ENCODE measurements at regions of chr2 and their contacts with region 1.

Region 1: GRCh38 chr2:156334496-156335478 is 2.3 kb upstream of the NR4A2 start:
- DNase-seq: peak; percentile 57 to 93 (median 67)
- H3K4me3 ChIP-seq: peak overlapping the region; percentile 48 to 80 (median 71)
- H3K27ac ChIP-seq: peak overlapping the region; percentile 33 to 87
- H3K4me1 ChIP-seq: peaks cover 17 to 45% (median 41%) of the 10 kb centered on the region in 4 experiments
- H3K27me3 ChIP-seq: peaks cover 9 to 27% (median 18%) of the 10 kb centered on the region in 5 experiments

Region 2: DNA sequence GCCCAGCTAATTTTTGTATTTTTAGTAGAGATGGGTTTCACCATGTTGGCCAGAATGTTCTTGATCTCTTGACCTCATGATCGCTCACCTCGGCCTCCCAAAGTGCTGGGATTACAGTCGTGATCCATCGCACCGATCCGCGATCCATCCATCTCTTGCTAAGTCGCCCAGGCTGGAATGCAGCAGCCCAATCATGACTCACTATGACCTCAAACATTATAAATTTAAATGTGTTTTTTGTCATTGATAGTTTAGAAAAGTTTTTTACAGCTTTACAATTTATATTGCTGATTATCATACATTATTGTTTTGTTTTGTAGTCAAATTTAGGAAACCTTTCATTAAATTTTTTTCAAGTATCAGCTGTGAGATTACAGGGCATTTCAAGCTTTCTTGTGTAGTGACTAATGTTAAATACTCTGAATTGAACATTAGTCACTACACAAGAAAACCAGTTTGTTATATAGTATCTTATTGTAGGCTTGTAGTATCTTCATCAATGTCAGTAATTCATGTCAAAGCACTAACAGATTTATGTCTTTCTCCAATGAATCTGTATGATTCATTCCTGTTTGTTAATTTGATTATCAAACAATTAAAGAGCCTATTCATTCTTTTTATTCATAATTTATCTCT is 39.7 kb before region 1 on chr2:
- CTCF ChIA-PET with region 1: no interaction called
- POLR2A ChIA-PET with region 1: no interaction called
- DNase-seq: no peak
- H3K4me3 ChIP-seq: no peak overlapping the region
- H3K27ac ChIP-seq: no peak overlapping the region
- H3K4me1 ChIP-seq: no peaks in the 10 kb centered on the region
- H3K27me3 ChIP-seq: no peaks in the 10 kb centered on the region

Region 3: GRCh38 chr2:156319811-156320485 is 14.8 kb before region 1 on chr2:
- CTCF ChIA-PET with region 1: interaction called, 11 read pairs
- POLR2A ChIA-PET with region 1: no interaction called
- DNase-seq: peak in 2 of 3 donors; percentile 52 to 65
- H3K4me3 ChIP-seq: peak overlapping the region in 4 of 7 experiments; percentile 8 to 46 (median 39)
- H3K27ac ChIP-seq: no peak overlapping the region
- H3K4me1 ChIP-seq: peaks cover 5 to 33% (median 24%) of the 10 kb centered on the region in 4 experiments
- H3K27me3 ChIP-seq: peaks cover 47 to 96% (median 53%) of the 10 kb centered on the region in 5 experiments

Region 4: DNA sequence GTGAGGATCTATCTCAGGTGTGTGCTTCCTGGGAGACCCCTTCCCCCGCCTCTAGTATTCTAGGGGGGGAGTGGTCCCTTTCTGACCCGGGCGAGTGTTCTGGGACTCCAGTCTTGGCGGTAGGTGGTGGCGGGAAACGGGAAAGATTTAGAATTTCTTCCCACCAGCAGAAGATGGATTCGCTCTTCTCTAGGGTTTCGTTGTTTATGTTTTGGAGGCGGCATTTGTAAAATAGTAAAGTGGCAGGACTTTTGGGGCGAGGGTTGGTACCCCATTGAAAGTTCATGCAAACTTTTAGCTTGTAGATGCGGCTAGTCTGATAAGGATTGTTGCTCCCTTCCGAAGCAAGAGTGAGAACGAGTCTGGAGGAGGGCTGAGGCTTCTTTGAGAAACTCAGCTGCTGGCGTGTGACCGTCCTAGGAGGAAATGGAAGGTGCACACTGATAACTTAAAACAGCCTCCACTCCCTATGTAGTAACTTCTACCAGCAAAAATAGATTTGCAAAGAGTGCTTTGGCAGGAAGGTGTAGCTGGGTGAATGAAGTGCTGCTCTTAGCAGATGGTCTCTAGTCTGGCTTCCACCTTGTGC is 101.8 kb after region 1 on chr2:
- CTCF ChIA-PET with region 1: interaction called, 11 read pairs
- POLR2A ChIA-PET with region 1: interaction called, 4 read pairs
- DNase-seq: peak; percentile 64 to 90 (median 83)
- H3K4me3 ChIP-seq: peak overlapping the region; percentile 38 to 93 (median 76)
- H3K27ac ChIP-seq: peak overlapping the region; percentile 77 to 90
- H3K4me1 ChIP-seq: peaks cover 12 to 30% (median 22%) of the 10 kb centered on the region in 4 experiments
- H3K27me3 ChIP-seq: no peaks in the 10 kb centered on the region

Measured in common myeloid progenitor, CD34-positive (primary cell).